ENCODE measurements at regions of chr11 and their contacts with region 1.

Region 1: DNA sequence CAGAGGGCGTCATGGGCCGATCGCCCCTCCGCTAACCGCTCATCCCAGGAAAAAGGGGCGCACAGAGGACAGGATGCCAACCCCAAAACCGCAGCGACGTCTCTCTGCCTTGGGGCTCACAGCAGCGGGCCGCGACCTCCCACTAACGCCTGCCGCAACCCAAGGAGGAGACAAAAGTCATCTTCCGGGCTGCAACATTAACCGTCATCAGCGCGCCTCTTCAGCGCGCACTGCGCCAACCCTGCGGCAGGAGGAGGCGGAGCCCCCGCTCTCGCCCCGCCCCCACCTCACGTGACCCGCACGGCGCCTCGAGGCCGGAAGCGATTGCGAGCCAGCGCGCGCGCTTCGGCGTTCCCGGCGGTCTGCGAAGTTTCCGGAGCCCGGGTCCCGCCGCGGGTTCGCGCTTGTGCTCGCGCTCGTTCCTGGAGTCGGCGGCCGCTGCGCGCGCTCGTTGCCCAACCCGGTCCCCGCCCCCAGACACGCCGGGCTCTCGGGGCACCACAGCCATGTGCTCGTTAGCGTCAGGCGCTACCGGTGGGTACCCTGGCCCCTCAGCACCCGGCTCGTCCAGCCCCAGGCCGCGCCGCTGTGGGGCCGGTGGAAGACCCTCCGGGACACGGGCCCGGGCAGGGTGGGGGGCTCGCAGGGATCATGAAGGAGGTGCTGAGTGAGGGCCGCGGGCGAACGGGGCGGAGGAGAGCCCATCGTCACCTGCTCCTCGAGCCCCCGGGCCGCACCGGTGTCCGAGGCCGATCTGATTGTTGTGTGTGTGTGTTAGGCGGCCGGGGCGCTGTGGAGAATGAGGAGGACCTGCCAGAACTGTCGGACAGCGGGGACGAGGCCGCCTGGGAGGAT is at the start of gene PRMT3:
- DNase-seq: peak; percentile 97
- H3K4me3 ChIP-seq: peak within 1 kb of the TSS; percentile 61 to 98 (median 71)
- H3K27ac ChIP-seq: peak within 1 kb of the TSS; percentile 61
- H3K4me1 ChIP-seq: peaks cover 13% of the 10 kb centered on the region
- H3K27me3 ChIP-seq: no peaks in the 10 kb centered on the region
- CTCF ChIP-seq: peak; percentile 97 to 99
- POLR2A ChIP-seq: peak; percentile 97
- total RNA-seq, gene PRMT3: 13.3 and 15.2 TPM in 2 replicates

Region 2: GRCh38 chr11:18578975-18579598 is 1808.4 kb before region 1 on chr11:
- CTCF ChIA-PET with region 1: no interaction called
- POLR2A ChIA-PET with region 1: no interaction called
- dilution Hi-C with region 1: no loop called
- intact Hi-C with region 1: loop called (anchors 5 kb)
- DNase-seq: no peak
- H3K4me3 ChIP-seq: no peak overlapping the region
- H3K27ac ChIP-seq: no peak overlapping the region
- H3K4me1 ChIP-seq: peaks cover 5% of the 10 kb centered on the region
- H3K27me3 ChIP-seq: no peaks in the 10 kb centered on the region
- CTCF ChIP-seq: no peak
- POLR2A ChIP-seq: no peak

Region 3: GRCh38 chr11:20363500-20364411 is 23.7 kb before region 1 on chr11 and contains the start of gene HTATIP2:
- CTCF ChIA-PET with region 1: interaction called, 3 read pairs
- POLR2A ChIA-PET with region 1: no interaction called
- dilution Hi-C with region 1: no loop called
- intact Hi-C with region 1: loop called (anchors 1 kb)
- DNase-seq: peak; percentile 69
- H3K4me3 ChIP-seq: peak within 1 kb of the TSS; percentile 12 to 66 (median 13)
- H3K27ac ChIP-seq: peak within 1 kb of the TSS; percentile 44
- H3K4me1 ChIP-seq: peaks cover 46% of the 10 kb centered on the region
- H3K27me3 ChIP-seq: no peaks in the 10 kb centered on the region
- CTCF ChIP-seq: no peak
- POLR2A ChIP-seq: peak; percentile 34
- total RNA-seq, gene HTATIP2: 54.4 and 57.6 TPM in 2 replicates

Region 4: DNA sequence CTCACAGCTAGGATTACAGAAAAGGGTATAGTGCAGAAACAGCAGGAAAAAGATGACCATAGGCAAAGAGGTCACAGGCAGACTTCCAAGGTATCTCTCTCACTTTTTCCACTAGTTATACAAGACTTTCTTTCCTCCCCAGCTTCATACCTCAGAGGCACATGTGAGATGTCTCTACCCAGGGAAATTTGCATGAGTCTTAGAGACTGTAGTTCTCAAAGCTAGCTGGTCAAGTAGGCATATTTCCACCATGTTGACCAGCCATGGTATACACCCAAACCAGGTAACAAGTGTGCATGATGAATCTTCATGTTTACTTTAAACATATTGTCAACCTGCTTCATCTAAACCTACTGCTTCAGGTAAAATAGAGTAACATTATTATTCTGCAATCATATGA is 28.0 kb after region 1 on chr11:
- CTCF ChIA-PET with region 1: no interaction called
- POLR2A ChIA-PET with region 1: no interaction called
- dilution Hi-C with region 1: no loop called
- intact Hi-C with region 1: no loop called
- DNase-seq: no peak
- H3K4me3 ChIP-seq: no peak overlapping the region
- H3K27ac ChIP-seq: no peak overlapping the region
- H3K4me1 ChIP-seq: no peaks in the 10 kb centered on the region
- H3K27me3 ChIP-seq: no peaks in the 10 kb centered on the region
- CTCF ChIP-seq: no peak
- POLR2A ChIP-seq: no peak

Region 5: DNA sequence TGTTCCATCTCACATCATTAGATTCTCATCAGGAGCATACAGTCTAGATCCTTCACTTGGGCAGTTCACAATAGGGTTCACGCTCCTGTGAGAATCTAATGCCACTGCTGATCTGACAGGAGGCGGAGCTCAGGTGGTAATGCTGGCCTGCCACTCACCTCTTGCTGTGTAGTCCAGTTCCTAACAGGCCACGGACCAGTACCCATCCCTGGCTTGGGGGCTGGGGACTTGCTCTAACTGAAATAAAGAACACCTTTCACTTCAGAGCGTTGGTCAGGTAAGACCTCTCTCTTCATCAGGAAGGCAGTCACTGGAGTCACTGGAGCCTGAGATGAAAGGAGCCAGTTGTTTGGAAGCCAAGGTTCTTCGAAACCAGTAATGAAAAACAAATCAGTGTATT is 41.7 kb after region 1 on chr11:
- CTCF ChIA-PET with region 1: no interaction called
- POLR2A ChIA-PET with region 1: no interaction called
- dilution Hi-C with region 1: no loop called
- intact Hi-C with region 1: no loop called
- DNase-seq: no peak
- H3K4me3 ChIP-seq: no peak overlapping the region
- H3K27ac ChIP-seq: no peak overlapping the region
- H3K4me1 ChIP-seq: no peaks in the 10 kb centered on the region
- H3K27me3 ChIP-seq: no peaks in the 10 kb centered on the region
- CTCF ChIP-seq: no peak
- POLR2A ChIP-seq: no peak

Region 6: GRCh38 chr11:20443596-20443995 is 56.1 kb after region 1 on chr11:
- CTCF ChIA-PET with region 1: interaction called, 8 read pairs
- POLR2A ChIA-PET with region 1: no interaction called
- dilution Hi-C with region 1: no loop called
- intact Hi-C with region 1: loop called (anchors 1 kb)
- DNase-seq: peak; percentile 42
- H3K4me3 ChIP-seq: no peak overlapping the region
- H3K27ac ChIP-seq: no peak overlapping the region
- H3K4me1 ChIP-seq: no peaks in the 10 kb centered on the region
- H3K27me3 ChIP-seq: no peaks in the 10 kb centered on the region
- CTCF ChIP-seq: peak in 1 of 2 donors; percentile 16
- POLR2A ChIP-seq: no peak

Region 7: GRCh38 chr11:20459865-20460264 is 72.4 kb after region 1 on chr11:
- CTCF ChIA-PET with region 1: no interaction called
- POLR2A ChIA-PET with region 1: no interaction called
- dilution Hi-C with region 1: no loop called
- intact Hi-C with region 1: no loop called
- DNase-seq: peak; percentile 8
- H3K4me3 ChIP-seq: no peak overlapping the region
- H3K27ac ChIP-seq: no peak overlapping the region
- H3K4me1 ChIP-seq: no peaks in the 10 kb centered on the region
- H3K27me3 ChIP-seq: no peaks in the 10 kb centered on the region
- CTCF ChIP-seq: no peak
- POLR2A ChIP-seq: no peak

Region 8: GRCh38 chr11:20544603-20545237 is 157.3 kb after region 1 on chr11:
- CTCF ChIA-PET with region 1: no interaction called
- POLR2A ChIA-PET with region 1: no interaction called
- dilution Hi-C with region 1: no loop called
- intact Hi-C with region 1: no loop called
- DNase-seq: no peak
- H3K4me3 ChIP-seq: no peak overlapping the region
- H3K27ac ChIP-seq: no peak overlapping the region
- H3K4me1 ChIP-seq: no peaks in the 10 kb centered on the region
- H3K27me3 ChIP-seq: peaks cover 0 to 3% of the 10 kb centered on the region in 2 experiments
- CTCF ChIP-seq: no peak
- POLR2A ChIP-seq: no peak

Region 9: GRCh38 chr11:20609727-20610707 is 222.5 kb after region 1 on chr11:
- CTCF ChIA-PET with region 1: interaction called, 9 read pairs
- POLR2A ChIA-PET with region 1: no interaction called
- dilution Hi-C with region 1: no loop called
- intact Hi-C with region 1: loop called (anchors 2 kb)
- DNase-seq: peak; percentile 65
- H3K4me3 ChIP-seq: no peak overlapping the region
- H3K27ac ChIP-seq: no peak overlapping the region
- H3K4me1 ChIP-seq: no peaks in the 10 kb centered on the region
- H3K27me3 ChIP-seq: peaks cover 23 to 42% of the 10 kb centered on the region in 2 experiments
- CTCF ChIP-seq: peak; percentile 83 to 96
- POLR2A ChIP-seq: no peak

Measured in endothelial cell of umbilical vein (primary cell).